Activated CD4-positive, alpha-beta T cell treated with anti-CD3 and anti-CD28 coated beads for 36 hours (primary cell): ENCODE measurements at regions of chr2 and their contacts with region 1.

Region 1: GRCh38 chr2:219199470-219200211 is 6.9 kb upstream of the ZFAND2B start:
- DNase-seq: no peak
- ATAC-seq: no peak
- H3K4me3 Mint-ChIP-seq: no peak overlapping the region
- H3K27ac Mint-ChIP-seq: no peak overlapping the region
- H3K4me1 Mint-ChIP-seq: peaks cover 8% of the 10 kb centered on the region
- H3K27me3 Mint-ChIP-seq: no peaks in the 10 kb centered on the region

Region 2: GRCh38 chr2:219171231-219171651 is 28.4 kb before region 1 on chr2:
- CTCF ChIA-PET with region 1: interaction called, 19 read pairs
- POLR2A ChIA-PET with region 1: no interaction called
- intact Hi-C with region 1: no loop called
- DNase-seq: peak; percentile 39
- ATAC-seq: peak; percentile 64
- H3K4me3 Mint-ChIP-seq: no peak overlapping the region
- H3K27ac Mint-ChIP-seq: peak overlapping the region; percentile 2
- H3K4me1 Mint-ChIP-seq: peaks cover 31% of the 10 kb centered on the region
- H3K27me3 Mint-ChIP-seq: no peaks in the 10 kb centered on the region

Region 3: GRCh38 chr2:219243291-219243761 is 43.7 kb after region 1 on chr2:
- CTCF ChIA-PET with region 1: no interaction called
- POLR2A ChIA-PET with region 1: no interaction called
- intact Hi-C with region 1: no loop called
- DNase-seq: no peak
- ATAC-seq: no peak
- H3K4me3 Mint-ChIP-seq: peak overlapping the region; percentile 66
- H3K27ac Mint-ChIP-seq: no peak overlapping the region
- H3K4me1 Mint-ChIP-seq: peaks cover 39% of the 10 kb centered on the region
- H3K27me3 Mint-ChIP-seq: no peaks in the 10 kb centered on the region